Transverse colon (tissue), 4 donors: ENCODE measurements at regions of chr6 and their contacts with region 1.

Region 1: DNA sequence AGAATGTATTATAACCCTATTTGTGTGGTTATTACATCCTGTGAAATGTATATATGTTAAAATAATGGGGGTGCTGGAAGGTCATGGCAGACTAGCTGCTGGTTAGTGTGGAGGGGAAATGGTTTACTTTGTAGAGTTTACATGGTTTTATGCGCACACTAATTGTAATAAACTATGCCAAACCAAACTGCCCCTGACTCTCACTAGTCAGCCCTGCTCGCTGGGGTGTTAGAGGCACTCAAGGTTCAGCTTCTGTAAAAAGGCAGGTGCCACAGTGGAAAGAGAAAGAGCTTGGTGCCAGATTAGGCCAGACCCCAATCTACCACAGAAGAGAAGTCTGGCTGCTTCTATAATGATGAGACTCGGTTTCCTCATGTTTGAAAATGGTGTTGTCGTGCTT is 52.7 kb downstream of the GOPC start:
- DNase-seq: no peak
- H3K4me3 ChIP-seq: no peak overlapping the region
- H3K27ac ChIP-seq: no peak overlapping the region
- H3K4me1 ChIP-seq: peaks cover 0 to 7% (median 0%) of the 10 kb centered on the region in 4 donors
- H3K27me3 ChIP-seq: no peaks in the 10 kb centered on the region
- CTCF ChIP-seq: no peak
- EP300 ChIP-seq: no peak
- POLR2A ChIP-seq: no peak

Region 2: GRCh38 chr6:117459204-117459944 is 90.2 kb before region 1 on chr6:
- in situ Hi-C with region 1: loop called in 2 of 4 experiments (anchors 5 to 10 kb)
- intact Hi-C with region 1: no loop called
- DNase-seq: no peak
- H3K4me3 ChIP-seq: no peak overlapping the region
- H3K27ac ChIP-seq: no peak overlapping the region
- H3K4me1 ChIP-seq: peaks cover 0 to 11% (median 0%) of the 10 kb centered on the region in 4 donors
- H3K27me3 ChIP-seq: no peaks in the 10 kb centered on the region
- CTCF ChIP-seq: no peak
- EP300 ChIP-seq: no peak
- POLR2A ChIP-seq: no peak